Heart right ventricle (tissue), 16 donors: ENCODE measurements at regions of chr6 and their contacts with region 1.

Region 1: DNA sequence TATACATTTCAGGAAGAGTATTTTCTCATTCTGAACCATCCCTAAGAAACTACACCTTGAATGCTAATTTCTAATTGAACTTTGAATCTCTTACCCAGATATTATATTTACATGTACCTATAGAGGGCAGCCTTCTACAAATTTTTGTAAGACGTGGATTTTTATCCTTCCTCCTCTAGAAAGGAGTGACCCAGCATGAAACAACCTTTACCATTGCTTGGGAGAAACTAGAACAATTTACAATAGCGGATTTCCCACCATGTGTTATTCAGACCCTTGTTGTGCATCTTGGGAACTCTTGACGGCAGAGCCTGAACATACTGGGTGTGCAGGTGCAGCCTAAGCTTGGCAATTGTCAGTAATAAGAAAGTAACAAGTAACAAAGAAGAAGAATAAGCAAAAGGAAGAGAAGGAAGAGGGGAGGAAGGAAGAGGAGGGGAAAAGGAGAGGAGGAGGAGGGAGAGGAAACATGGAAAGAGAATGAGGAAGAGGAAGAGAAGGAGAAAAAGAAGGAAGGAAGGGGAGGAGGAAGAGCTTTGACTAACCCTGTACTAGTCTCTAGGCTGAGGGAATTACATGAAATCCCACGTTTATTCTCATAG is 10.8 kb upstream of the TAAR1 start:
- DNase-seq: no peak
- ATAC-seq: peak in 7 of 8 donors; percentile 33 to 75 (median 64)
- H3K4me3 ChIP-seq: no peak overlapping the region
- H3K27ac ChIP-seq: peak overlapping the region in 1 of 10 donors; percentile 49
- H3K4me1 ChIP-seq: peaks cover 0 to 12% (median 0%) of the 10 kb centered on the region in 9 donors
- H3K27me3 ChIP-seq: peaks cover 0 to 6% (median 0%) of the 10 kb centered on the region in 7 donors
- CTCF ChIP-seq: peak; percentile 16 to 68 (median 58)

Region 2: GRCh38 chr6:132607544-132608233 is 62.1 kb before region 1 on chr6:
- intact Hi-C with region 1: no loop called
- DNase-seq: no peak
- ATAC-seq: no peak
- H3K4me3 ChIP-seq: no peak overlapping the region
- H3K27ac ChIP-seq: no peak overlapping the region
- H3K4me1 ChIP-seq: no peaks in the 10 kb centered on the region
- H3K27me3 ChIP-seq: peaks cover 0 to 10% (median 0%) of the 10 kb centered on the region in 7 donors
- CTCF ChIP-seq: no peak

Region 3: DNA sequence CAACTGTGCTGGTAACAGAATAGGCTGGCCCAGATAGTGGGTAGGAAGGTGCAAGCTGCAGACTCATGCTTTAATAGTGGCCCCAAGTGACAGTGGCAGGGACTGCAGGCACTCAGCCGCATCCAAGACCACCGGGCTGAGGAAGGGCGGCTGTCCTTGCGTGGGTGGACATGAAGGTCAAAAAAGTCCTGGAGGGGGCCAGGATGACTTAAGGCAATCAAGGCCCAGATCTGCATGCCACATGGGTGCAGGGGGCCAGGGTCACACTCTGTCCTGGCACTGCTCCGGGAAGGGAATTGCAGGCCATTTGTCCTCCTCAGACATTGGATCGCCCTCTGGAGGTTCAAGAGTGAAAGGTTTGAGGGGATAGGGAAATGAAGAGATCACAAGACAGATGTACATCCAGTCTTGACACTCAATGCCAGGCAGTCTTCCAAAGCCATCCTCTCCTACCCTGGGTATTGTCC is 98.3 kb after region 1 on chr6:
- intact Hi-C with region 1: loop called in 7 of 10 experiments (anchors 2 to 10 kb)
- DNase-seq: peak; percentile 7 to 25
- ATAC-seq: peak; percentile 76 to 88 (median 84)
- H3K4me3 ChIP-seq: no peak overlapping the region
- H3K27ac ChIP-seq: no peak overlapping the region
- H3K4me1 ChIP-seq: peaks cover 0 to 17% (median 0%) of the 10 kb centered on the region in 9 donors
- H3K27me3 ChIP-seq: no peaks in the 10 kb centered on the region
- CTCF ChIP-seq: peak in 7 of 9 donors; percentile 41 to 69 (median 57)

Region 4: DNA sequence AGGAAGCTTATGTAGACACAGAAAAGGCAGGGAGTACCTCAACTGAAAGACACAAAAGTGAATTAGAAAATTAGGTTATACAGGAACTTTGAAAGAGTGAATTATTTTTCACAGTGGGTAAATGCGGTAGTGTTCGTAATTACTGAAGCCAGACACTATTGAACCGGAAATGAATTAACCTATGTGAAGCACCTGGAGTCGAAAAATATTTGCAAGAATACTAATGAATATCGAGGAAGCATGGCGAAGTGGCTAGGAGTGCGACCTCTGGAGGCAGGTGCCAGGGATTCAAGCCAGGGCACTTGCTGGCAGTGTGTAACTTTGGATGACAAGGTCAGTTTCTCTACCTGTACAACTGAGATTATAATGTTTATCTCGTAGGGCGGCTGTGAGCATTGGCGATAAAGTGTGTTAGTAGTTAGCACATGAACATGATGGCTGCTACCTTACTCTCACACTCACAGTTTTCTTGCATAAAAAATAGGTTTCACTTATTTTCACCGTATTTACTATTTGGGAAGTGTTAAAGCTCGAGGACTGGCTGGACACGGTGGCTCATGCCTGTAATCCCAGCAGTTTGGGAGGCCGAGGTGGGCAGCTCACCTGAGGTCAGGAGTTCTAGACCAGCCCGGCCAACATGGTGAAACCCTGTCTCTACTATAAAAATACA is 129.2 kb after region 1 on chr6:
- intact Hi-C with region 1: loop called in 5 of 10 experiments (anchors 10 kb)
- DNase-seq: peak; percentile 63 to 66
- ATAC-seq: peak; percentile 75 to 94 (median 89)
- H3K4me3 ChIP-seq: peak overlapping the region; percentile 72 to 97 (median 83)
- H3K27ac ChIP-seq: peak overlapping the region in 9 of 10 donors; percentile 1 to 78 (median 67)
- H3K4me1 ChIP-seq: peaks cover 0 to 13% (median 7%) of the 10 kb centered on the region in 9 donors
- H3K27me3 ChIP-seq: no peaks in the 10 kb centered on the region
- CTCF ChIP-seq: peak; percentile 57 to 88 (median 75)